ENCODE measurements at regions of chr1 and their contacts with region 1.

Region 1: DNA sequence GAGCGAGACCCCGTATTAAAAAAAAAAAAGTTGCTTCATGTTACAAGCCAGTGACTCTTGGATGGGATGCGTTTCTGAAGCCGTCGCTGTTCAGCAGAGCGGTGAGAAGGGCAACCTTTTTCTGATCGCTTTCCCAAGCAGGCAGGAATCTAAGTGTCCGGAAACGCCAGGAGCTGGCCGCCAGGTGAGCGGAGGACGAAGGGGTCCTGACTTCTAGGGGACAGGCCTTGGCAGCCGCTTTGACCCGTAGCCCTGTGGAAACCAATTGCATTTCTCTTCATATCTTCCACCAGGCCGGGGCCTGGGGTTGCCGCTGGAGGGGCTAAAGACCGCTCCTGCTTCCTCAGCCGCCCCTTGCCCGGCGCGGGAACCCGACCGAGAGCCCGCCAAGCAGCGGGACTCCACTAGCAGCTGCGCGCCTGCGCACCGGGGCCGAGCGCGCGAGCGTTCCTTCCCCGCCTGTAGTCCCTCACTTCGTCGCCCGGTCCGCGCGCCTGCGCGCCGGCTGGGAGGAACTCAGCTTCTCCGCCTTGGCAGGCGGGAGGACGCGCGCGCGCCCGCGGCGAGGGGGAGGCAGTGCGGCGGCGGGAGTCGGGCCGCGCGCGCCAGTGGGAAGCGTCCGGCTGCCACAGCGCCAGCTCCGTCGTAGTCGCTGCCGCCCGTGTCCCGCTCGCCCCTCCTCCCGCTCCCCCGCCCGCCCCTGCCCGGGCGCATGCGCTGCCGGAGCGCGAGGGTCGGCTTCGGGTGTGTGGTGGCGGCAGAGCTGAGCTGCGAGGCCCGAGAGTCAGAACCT is at the start of gene SPEN:
- DNase-seq: peak; percentile 95
- ATAC-seq: peak; percentile 73
- H3K4me3 Mint-ChIP-seq: peak within 1 kb of the TSS; percentile 92
- H3K27ac Mint-ChIP-seq: peak within 1 kb of the TSS; percentile 100
- H3K4me1 Mint-ChIP-seq: peaks cover 29% of the 10 kb centered on the region
- H3K27me3 Mint-ChIP-seq: peaks cover 5% of the 10 kb centered on the region; the same call in 1 of the 2 replicates
- CTCF ChIP-seq: no peak
- total RNA-seq, gene SPEN: 48.5 to 50.2 TPM (median 48.8 TPM) in 3 replicates

Region 2: DNA sequence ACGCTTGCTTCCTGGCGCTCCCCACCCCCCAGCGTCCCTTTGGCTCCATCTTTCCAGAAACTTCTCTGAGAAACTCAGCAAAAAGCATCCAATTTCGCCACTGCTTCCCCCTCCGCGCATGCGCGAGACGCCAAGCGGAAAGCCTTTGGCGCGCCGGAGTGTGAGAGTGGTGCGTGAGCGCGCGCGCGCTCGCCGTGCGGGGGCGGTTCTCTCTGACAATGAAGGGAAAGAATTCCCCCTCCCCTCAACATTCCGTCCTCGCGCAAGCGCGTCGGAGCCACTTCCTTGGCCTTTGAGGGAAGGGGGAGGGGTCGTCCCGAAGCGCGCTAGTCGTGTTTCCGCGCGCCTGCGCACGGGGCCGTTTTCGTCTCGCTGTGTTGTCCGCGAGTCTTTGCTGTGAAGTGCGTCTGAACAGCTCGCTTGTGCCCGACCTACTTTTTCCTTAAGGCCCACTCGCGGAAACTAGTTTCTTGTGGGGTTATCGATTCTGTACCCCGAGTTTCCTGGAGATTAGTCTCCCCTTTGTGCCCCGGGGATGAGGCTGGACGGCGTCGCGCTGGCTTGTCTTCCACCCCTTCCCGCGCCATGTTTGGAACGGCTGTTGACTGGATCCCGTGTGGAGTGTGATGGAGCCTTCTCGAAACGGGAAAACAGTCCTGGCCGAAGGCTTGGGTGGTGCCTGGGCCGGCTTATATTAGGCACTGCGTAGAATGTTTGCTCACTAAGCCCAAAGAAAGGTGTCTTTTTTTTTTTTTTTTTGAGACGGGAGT is 11.4 kb before region 1 on chr1:
- CTCF ChIA-PET with region 1: interaction called, 13 read pairs
- POLR2A ChIA-PET with region 1: interaction called, 51 read pairs
- DNase-seq: peak; percentile 92
- ATAC-seq: peak; percentile 50
- H3K4me3 Mint-ChIP-seq: peak overlapping the region; percentile 81
- H3K27ac Mint-ChIP-seq: peak overlapping the region; percentile 99
- H3K4me1 Mint-ChIP-seq: peaks cover 33% of the 10 kb centered on the region
- H3K27me3 Mint-ChIP-seq: no peaks in the 10 kb centered on the region; the same call in 1 of the 2 replicates
- CTCF ChIP-seq: no peak

Region 3: DNA sequence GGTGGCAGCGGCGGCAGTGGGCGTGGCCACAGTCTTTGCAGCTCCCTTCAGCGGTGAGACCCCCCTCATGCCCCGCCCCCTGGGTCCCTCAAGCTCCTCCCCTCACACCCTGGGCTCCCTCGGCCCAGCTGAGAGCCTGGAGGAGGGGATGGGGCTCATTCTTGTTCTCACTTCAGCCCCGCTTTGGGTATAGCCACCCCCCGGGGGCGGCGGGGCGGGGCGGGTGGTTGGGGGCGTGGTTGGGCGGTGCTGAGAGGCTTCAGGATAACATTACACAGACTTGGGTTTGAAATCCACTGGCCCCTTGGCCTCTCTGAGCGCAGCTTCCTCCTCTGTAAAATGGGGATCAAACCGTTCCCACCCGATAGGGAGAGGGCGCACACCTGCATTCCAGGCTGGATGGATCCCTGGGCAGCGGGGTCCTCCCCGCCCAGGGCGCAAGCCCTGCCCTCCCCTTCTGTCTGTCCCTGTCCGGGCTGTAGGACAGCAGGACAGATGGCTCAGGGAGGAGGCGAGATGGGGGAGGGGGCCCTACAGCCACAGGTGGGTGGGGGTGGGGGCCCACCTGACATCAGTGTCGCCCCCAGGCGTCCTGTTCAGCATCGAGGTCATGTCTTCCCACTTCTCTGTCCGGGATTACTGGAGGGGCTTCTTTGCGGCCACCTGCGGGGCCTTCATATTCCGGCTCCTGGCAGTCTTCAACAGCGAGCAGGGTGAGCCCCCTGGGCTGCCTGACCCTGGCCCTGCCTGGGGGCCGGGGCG is 179.6 kb after region 1 on chr1:
- CTCF ChIA-PET with region 1: no interaction called
- POLR2A ChIA-PET with region 1: no interaction called
- DNase-seq: peak; percentile 98
- ATAC-seq: peak; percentile 96
- H3K4me3 Mint-ChIP-seq: peak overlapping the region; percentile 66
- H3K27ac Mint-ChIP-seq: no peak overlapping the region
- H3K4me1 Mint-ChIP-seq: peaks cover 16% of the 10 kb centered on the region
- H3K27me3 Mint-ChIP-seq: peaks cover 41% of the 10 kb centered on the region
- CTCF ChIP-seq: no peak

Measured in WTC11 (cell line).